ENCODE measurements at regions of chr7 and their contacts with region 1.

Region 1: DNA sequence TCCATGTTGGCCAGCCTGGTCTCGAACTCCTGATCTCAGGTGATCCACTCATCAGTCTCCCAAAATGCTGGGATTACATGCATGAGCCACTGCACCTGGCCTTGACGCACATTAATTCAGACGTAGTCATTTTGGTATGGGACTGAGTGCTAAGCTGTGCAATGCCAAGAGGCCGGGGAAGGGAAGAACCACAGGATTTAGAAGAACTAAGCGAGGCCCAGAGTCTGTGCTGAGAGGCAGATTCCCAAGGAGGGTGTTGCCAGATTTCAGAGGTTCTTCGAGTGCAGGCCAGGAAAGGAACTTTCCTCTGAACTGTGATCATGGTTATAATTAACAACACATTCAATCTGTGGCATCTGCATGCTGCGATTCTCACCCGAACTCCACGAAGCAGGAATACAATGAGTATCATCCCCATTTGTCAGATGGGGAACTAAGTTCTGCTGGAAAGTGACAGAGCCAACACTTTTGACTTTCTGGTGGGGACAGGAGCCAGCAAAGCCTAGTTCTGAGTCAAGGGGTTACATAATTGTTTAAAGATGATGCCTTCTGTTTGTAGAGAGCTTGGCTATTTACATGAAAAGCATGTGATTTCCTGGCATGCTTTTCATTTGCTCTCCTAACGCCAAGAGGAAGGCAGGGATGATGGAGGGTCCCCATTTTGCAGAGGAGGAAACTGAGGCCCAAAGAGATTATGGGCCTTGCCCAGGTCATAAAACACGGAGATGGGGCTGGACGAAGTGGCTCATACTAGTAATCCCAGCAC is 6.2 kb upstream of the ZAN start:
- DNase-seq: no peak
- H3K4me3 ChIP-seq: no peak overlapping the region
- H3K27ac ChIP-seq: no peak overlapping the region
- H3K4me1 ChIP-seq: no peaks in the 10 kb centered on the region
- CTCF ChIP-seq: no peak

Region 2: DNA sequence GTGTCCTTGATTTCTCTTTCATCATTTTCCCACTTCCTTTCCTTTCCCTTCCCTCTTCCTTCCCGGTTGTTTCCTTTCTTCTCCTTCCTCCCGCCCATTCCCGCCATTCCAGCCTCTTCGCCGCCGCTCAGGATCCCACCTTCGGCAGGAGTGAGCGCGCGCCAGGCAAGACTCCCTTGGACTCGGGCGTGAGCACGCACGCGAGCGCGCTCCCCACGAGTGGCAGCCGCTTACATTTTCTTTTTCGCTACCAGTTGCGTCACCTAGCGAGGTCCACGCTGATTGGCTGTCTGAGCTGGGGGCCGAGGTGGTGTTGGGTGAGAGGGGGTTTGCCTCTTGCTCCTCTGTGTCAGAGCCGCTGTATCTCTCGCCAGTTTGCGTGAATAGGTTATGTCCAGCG is 18.0 kb after region 1 on chr7:
- CTCF ChIA-PET with region 1: no interaction called
- POLR2A ChIA-PET with region 1: no interaction called
- intact Hi-C with region 1: loop called (anchors 2 kb)
- DNase-seq: no peak
- H3K4me3 ChIP-seq: no peak overlapping the region
- H3K27ac ChIP-seq: no peak overlapping the region
- H3K4me1 ChIP-seq: no peaks in the 10 kb centered on the region
- CTCF ChIP-seq: no peak

Measured in OCI-LY7 (cell line).